ENCODE measurements at regions of chr1 and their contacts with region 1.

Region 1: DNA sequence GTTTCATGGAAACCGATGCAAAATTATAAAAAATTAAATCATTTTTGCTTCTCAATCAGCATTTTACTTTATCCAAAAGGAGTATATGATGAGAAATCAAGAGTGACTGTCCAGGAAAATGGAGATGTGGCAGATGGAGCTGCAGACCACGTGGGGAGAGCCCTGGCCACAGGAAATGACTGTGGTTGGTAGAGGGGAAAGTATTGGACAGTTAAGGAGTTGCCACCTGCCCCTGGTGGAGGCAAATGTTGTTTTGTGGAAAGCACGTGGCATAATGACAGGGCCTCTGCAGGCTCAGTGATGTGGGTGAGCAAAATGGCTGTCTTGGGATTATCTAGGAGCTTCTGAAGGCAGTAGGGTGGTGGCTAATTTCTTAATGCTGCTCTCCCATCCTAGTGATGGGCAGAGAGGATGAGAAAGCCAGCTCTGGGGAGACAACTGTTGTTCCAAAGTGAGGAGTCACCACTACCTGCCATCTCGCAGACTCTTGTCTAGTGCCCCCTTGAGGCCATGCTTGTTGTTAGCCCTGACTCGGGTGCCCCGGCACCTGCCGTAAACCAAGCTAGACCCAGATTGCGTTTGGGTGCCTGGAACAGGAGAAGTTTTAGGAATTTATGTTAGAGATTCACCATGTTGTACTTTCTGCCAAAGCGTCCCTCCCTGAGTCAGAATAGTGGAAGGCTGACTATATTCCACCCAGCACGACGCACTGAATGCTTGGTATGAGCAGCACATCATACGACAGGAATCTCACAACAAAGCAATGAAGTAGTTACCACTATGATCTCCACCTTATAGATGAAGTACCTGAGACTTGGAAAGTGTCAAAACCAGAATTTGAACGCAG is 144.0 kb downstream of the ROR1 start:
- DNase-seq: no peak
- ATAC-seq: no peak

Region 2: GRCh38 chr1:63779338-63780211 is 138.2 kb before region 1 on chr1:
- intact Hi-C with region 1: loop called (anchors 10 kb)
- DNase-seq: no peak
- ATAC-seq: peak; percentile 25